Activated CD8-positive, alpha-beta memory T cell treated with anti-CD3 and anti-CD28 coated beads, Interleukin-2, amount 10 ng/mL, durations not matched to agents 7 days and 5 days (primary cell): ENCODE measurements at regions of chr14 and their contacts with region 1.

Region 1: GRCh38 chr14:67571272-67571850 is 28.7 kb downstream of the PIGH start:
- DNase-seq: peak; percentile 77
- ATAC-seq: peak; percentile 95
- H3K4me3 Mint-ChIP-seq: no peak overlapping the region
- H3K27ac Mint-ChIP-seq: no peak overlapping the region
- H3K4me1 Mint-ChIP-seq: peaks cover 10% of the 10 kb centered on the region
- H3K27me3 Mint-ChIP-seq: peaks cover 3% of the 10 kb centered on the region

Region 2: DNA sequence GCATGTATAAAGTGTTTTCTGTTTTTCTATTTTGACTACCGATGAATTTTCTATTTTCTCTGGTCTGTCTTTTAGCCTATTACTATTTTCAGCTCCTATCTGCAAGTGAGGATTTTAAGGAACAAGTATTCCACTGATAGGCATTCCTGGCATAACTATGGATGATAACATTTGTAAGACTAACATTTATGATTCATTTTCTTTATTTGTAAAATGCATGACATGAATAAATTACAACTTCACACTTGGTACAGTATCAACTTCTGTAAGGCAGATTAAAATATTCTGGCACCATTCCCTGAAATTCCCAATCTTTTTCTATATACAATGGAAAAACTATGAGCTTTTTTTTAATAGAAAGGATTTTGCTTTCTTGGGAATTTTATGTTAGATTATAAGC is 503.1 kb before region 1 on chr14:
- CTCF ChIA-PET with region 1: no interaction called
- DNase-seq: no peak
- ATAC-seq: no peak
- H3K4me3 Mint-ChIP-seq: no peak overlapping the region
- H3K27ac Mint-ChIP-seq: no peak overlapping the region
- H3K4me1 Mint-ChIP-seq: peaks cover 2% of the 10 kb centered on the region
- H3K27me3 Mint-ChIP-seq: no peaks in the 10 kb centered on the region

Region 3: GRCh38 chr14:67426983-67427606 is 144.3 kb before region 1 on chr14:
- CTCF ChIA-PET with region 1: interaction called, 145 read pairs
- DNase-seq: peak; percentile 80
- ATAC-seq: peak; percentile 89
- H3K4me3 Mint-ChIP-seq: no peak overlapping the region
- H3K27ac Mint-ChIP-seq: no peak overlapping the region
- H3K4me1 Mint-ChIP-seq: peaks cover 9% of the 10 kb centered on the region
- H3K27me3 Mint-ChIP-seq: peaks cover 34% of the 10 kb centered on the region

Region 4: DNA sequence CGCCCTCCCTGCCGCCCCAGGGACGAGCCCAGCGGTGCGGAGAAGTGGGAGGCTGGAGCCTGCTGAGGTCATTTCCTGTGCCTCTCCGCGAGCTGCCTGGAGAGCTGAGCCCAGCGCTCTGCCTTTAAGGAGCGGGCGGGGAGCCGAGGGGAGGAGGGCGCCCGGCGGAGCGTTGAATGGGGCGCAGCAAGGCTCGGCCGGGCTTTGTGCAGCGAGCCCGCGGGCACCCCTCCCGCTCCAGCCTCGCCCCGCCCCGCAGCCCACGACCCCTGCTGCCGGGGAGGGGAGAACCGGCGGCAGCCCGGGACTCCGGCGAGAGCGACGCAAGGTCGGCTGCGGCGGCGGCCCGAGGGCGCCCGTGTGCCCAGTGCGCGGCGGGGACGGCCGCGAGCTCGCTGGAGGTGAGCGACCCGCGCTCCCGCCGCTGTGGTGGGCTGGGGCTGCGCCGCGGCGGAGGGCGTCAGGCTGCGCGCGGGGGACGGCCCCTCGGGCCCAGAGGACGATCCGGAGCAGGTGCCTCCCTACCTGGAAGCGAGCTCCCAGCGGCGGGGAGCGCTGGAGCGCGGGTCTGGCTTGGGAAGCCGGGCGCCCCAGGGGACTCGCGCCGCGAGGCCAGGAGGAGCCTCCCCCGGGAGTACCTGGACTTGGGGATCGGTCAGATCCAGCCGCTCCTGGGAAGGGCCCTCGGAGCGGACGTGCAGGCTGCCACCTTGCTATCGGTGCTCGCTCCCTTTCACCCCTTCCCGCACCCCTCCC is 38.2 kb before region 1 on chr14 and contains the start of gene PLEKHH1:
- CTCF ChIA-PET with region 1: interaction called, 61 read pairs
- DNase-seq: peak; percentile 68
- ATAC-seq: peak; percentile 90
- H3K4me3 Mint-ChIP-seq: peak within 1 kb of the TSS; percentile 38
- H3K27ac Mint-ChIP-seq: no peak within 1 kb of the TSS
- H3K4me1 Mint-ChIP-seq: no peaks in the 10 kb centered on the region
- H3K27me3 Mint-ChIP-seq: peaks cover 66% of the 10 kb centered on the region
- total RNA-seq, gene PLEKHH1: 0.19 to 0.79 TPM

Region 5: DNA sequence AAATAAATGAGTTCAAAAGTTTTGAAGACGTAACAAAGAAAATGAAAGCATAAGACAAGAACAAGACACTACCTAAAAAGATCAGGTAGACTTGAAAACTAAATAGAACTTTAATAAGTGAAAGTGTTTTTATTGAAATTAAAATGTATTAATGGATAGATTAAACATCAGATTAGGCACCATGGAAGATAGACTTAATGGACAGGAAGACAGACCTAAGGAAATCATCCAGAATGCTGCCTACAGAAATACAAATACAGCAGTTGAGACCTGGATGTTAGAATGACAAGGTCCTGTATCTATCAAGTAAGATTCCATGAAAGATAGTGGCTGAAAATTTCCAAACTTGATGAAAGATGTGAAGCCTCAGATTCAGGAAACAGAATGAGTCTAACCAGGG is 26.8 kb before region 1 on chr14:
- CTCF ChIA-PET with region 1: no interaction called
- DNase-seq: no peak
- ATAC-seq: no peak
- H3K4me3 Mint-ChIP-seq: no peak overlapping the region
- H3K27ac Mint-ChIP-seq: no peak overlapping the region
- H3K4me1 Mint-ChIP-seq: no peaks in the 10 kb centered on the region
- H3K27me3 Mint-ChIP-seq: peaks cover 62% of the 10 kb centered on the region

Region 6: DNA sequence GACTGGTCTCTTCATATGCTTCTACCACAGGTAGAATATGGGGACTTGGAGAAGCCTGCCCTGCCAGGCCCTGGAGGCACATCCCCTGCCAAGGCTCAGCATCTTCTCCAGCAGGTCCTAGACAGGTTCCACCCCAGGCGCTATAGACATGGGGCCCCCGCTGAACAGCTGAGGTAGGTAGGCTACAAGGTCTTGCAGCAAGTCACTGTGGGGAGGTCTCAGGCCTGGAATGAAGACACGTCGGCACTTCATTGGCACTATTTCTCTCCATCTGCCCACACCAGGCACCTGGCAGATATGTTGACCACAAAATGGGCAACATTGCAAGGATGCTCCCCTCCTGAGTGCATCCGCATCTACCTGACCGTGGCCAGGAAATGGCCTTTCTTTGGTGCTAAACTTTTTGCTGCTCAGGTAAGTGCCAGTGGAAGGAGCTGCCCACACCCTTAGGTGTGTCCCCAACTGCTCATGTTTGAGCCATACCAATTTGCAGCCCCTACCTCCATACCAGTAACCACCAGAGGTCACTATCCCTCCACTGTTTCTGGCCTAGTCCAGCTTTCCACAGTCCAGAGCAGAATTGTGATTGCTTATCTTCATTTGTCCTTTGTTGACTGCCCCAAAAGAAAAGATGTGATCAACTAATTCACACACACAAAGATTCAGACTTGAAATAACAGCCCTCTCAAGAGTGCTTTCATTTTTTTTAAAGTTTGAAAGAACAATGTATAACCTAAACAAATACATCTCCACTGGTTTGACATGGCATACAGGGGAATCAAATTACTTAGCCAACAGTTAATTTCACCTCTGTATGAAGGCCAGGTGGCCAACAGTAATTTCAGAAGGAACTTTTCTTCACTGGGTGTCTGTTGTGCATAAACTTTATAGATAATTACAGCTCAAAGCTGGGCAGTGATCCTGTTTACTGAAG is 12.6 kb after region 1 on chr14:
- CTCF ChIA-PET with region 1: interaction called, 36 read pairs
- DNase-seq: peak; percentile 50
- ATAC-seq: peak; percentile 78
- H3K4me3 Mint-ChIP-seq: no peak overlapping the region
- H3K27ac Mint-ChIP-seq: no peak overlapping the region
- H3K4me1 Mint-ChIP-seq: peaks cover 12% of the 10 kb centered on the region
- H3K27me3 Mint-ChIP-seq: no peaks in the 10 kb centered on the region

Region 7: GRCh38 chr14:67704484-67705089 is 133.2 kb after region 1 on chr14:
- CTCF ChIA-PET with region 1: interaction called, 16 read pairs
- DNase-seq: no peak
- ATAC-seq: peak; percentile 85
- H3K4me3 Mint-ChIP-seq: no peak overlapping the region
- H3K27ac Mint-ChIP-seq: no peak overlapping the region
- H3K4me1 Mint-ChIP-seq: peaks cover 3% of the 10 kb centered on the region
- H3K27me3 Mint-ChIP-seq: peaks cover 4% of the 10 kb centered on the region